ENCODE measurements at regions of chr12 and their contacts with region 1.

Region 1: GRCh38 chr12:64890873-64891468 is 66.5 kb downstream of the TBC1D30 start:
- DNase-seq: peak in 2 of 42 donors; percentile 22 to 61

Region 2: GRCh38 chr12:66080791-66081190 is 1189.8 kb after region 1 on chr12:
- intact Hi-C with region 1: loop called (anchors 5 kb)
- DNase-seq: no peak

Measured in head of caudate nucleus (tissue), 42 donors.